ENCODE measurements at regions of chr12 and their contacts with region 1.

Region 1: GRCh38 chr12:119115296-119115905 is 63.3 kb upstream of the HSPB8 start:
- DNase-seq: peak in 1 of 2 donors; percentile 6
- ATAC-seq: no peak

Region 2: GRCh38 chr12:119544765-119545625 is 429.6 kb after region 1 on chr12:
- intact Hi-C with region 1: loop called in 1 of 2 experiments (anchors 10 kb)
- DNase-seq: peak in 1 of 2 donors; percentile 51
- ATAC-seq: no peak